GM10248 (cell line): ENCODE measurements at regions of chr11 and their contacts with region 1.

Region 1: GRCh38 chr11:8092587-8093424 is 11.8 kb downstream of the TUB start:
- DNase-seq: peak; percentile 82
- CTCF ChIP-seq: peak; percentile 54

Region 2: GRCh38 chr11:8070417-8071115 is 22.2 kb before region 1 on chr11:
- CTCF ChIA-PET with region 1: interaction called, 15 read pairs
- POLR2A ChIA-PET with region 1: no interaction called
- DNase-seq: peak; percentile 59
- CTCF ChIP-seq: peak; percentile 30

Region 3: DNA sequence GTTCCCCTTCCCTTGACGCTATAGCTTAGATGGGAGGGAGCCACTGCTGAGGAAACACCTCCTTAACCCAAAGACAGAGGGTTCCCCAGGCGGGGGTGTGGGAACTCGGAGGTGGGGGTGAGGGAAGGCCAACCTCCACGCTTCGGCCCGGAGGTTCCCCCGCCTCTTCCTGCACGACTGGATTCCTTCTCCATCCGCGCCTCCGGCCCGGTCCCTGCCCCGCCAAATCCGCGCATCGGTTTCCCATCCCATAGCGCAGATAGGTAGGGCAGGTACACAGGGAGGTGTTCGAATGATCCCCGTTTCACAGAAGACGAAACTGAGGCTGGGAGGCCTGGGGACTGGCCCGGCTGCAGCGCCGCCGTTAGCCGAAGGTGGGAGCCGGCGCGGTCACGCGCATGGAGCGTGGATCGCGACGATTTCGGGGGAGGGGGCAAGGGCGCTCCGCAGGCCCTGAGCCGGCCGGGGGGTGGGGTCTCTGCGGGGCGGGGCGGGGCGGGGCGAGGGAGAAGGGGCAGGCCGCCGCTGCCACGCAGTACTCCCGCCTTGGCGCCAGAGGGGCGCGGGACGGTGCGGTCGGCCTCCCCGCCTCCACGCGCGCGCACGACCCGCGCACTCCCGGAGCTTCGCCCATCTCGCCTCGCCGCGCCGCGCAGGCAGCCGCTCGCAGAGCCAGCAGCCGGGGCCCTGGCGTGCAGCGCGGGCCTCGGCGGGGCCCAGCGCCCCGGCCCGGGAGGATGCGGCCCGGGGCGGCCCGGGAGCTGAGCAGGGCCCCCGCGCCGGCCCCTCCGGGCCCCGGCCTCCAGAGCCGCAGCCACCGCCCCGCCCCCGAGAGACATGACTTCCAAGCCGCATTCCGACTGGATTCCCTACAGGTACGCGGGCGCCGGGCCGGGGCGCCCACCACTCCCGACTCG is 11.9 kb before region 1 on chr11 and contains the start of gene TUB:
- CTCF ChIA-PET with region 1: interaction called, 124 read pairs
- POLR2A ChIA-PET with region 1: no interaction called
- DNase-seq: no peak
- CTCF ChIP-seq: no peak

Region 4: DNA sequence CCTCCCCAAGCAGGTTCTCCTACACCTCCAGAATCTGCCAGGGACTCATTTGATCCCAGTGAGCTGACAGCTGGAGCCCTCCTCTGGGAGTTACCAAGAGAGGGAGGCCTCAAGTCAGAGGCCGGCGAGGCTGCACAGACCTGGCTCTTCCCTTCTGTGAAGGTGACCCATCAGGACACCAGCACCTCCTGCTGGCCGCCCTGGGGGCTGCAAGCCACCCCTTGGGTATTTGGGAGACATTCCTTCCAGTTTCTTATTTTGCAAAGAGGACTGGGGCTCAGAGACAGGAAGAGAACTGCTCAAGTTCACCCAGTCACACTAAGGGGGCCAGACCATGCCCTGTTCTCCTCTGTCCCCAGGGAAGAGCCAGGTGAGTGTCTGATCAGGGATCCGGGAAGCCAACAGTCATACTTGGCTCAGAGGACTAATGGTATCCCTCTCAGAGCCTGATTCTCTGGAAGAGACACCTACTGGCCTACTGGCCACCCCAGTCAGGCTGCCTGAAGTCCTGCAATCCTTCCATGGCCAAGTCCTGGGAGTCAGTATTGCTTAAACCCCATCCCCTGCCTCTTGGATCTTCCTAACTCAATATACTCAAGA is 116.5 kb after region 1 on chr11:
- CTCF ChIA-PET with region 1: no interaction called
- POLR2A ChIA-PET with region 1: no interaction called
- DNase-seq: peak; percentile 60
- CTCF ChIP-seq: peak; percentile 44